CD4-positive, alpha-beta T cell (primary cell): ENCODE measurements at regions of chr19 and their contacts with region 1.

Region 1: GRCh38 chr19:19884583-19884982 is 16.2 kb upstream of the ZNF93 start:
- DNase-seq: no peak
- ATAC-seq: no peak
- H3K4me3 ChIP-seq: no peak overlapping the region
- H3K4me3 Mint-ChIP-seq: no peak overlapping the region
- H3K27ac ChIP-seq: no peak overlapping the region
- H3K27ac Mint-ChIP-seq: no peak overlapping the region
- H3K4me1 ChIP-seq: no peaks in the 10 kb centered on the region
- H3K4me1 Mint-ChIP-seq: no peaks in the 10 kb centered on the region
- H3K27me3 ChIP-seq: no peaks in the 10 kb centered on the region
- H3K27me3 Mint-ChIP-seq: no peaks in the 10 kb centered on the region
- CTCF ChIP-seq: no peak

Region 2: DNA sequence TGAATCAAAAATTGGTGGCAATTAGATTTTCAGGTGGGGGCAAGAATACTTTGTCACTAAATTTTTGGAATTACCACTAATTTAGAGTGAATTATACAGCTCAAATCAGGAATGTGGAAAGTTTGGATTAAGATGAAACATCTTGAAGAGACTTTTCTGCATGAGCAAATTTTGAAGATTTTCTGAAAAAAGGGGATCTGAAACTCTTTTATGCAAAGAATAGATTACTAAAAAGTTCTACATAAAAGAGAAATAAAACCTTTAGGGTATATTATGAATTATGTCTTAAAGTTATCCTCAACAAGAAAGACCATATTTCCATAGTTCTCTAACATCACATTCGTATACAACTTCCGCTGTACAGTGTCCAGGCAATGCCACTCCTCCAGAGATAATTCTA is 52.8 kb after region 1 on chr19:
- CTCF ChIA-PET with region 1: no interaction called
- POLR2A ChIA-PET with region 1: no interaction called
- intact Hi-C with region 1: loop called in 1 of 2 experiments (anchors 10 kb)
- DNase-seq: no peak
- ATAC-seq: no peak
- H3K4me3 ChIP-seq: no peak overlapping the region
- H3K4me3 Mint-ChIP-seq: no peak overlapping the region
- H3K27ac ChIP-seq: no peak overlapping the region
- H3K27ac Mint-ChIP-seq: no peak overlapping the region
- H3K4me1 ChIP-seq: no peaks in the 10 kb centered on the region
- H3K4me1 Mint-ChIP-seq: no peaks in the 10 kb centered on the region
- H3K27me3 ChIP-seq: no peaks in the 10 kb centered on the region
- H3K27me3 Mint-ChIP-seq: no peaks in the 10 kb centered on the region
- CTCF ChIP-seq: no peak